ENCODE measurements at regions of chr1 and their contacts with region 1.

Region 1: DNA sequence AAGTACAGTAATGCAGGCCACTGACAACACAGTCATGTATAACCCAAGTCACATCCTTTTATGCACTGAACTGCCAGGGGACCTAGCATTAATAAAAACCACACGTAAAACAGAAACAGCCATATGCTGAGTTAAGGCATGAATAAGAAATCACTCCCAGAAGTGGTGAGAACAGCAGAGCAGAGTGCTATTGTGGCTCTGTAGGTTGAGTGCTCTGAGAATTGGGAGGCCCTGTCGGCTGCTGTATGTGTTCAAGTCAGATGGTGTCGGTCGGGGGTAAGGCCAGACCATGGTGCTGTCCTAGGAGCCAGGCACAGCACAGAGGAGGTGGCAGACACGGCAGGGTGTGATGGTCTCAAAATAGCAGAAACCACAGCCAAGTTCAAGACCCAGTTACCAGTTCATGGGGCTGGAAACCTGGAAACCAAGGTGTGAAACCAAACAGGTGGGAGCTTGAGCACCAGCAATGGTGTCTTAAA is 126.6 kb upstream of the COA6 start:
- DNase-seq: peak; percentile 93
- ATAC-seq: peak; percentile 90
- H3K4me3 ChIP-seq: 0 out of 2 replicates have a peak overlapping the region, but pooled peaks have one; percentile 3
- H3K27ac ChIP-seq: peak overlapping the region; percentile 75
- H3K4me1 ChIP-seq: peaks cover 44% of the 10 kb centered on the region
- H3K27me3 ChIP-seq: no peaks in the 10 kb centered on the region
- CTCF ChIP-seq: no peak
- EP300 ChIP-seq: peak in 1 of 2 experiments; percentile 7; a peak in 2 of 4 replicates
- POLR2A ChIP-seq: no peak
- RAD21 ChIP-seq: no peak

Region 2: GRCh38 chr1:234230414-234230862 is 16.2 kb before region 1 on chr1:
- CTCF ChIA-PET with region 1: interaction called, 14 read pairs
- POLR2A ChIA-PET with region 1: interaction called, 5 read pairs
- RAD21 ChIA-PET with region 1: interaction called, 4 read pairs
- SMC1A ChIA-PET with region 1: interaction called, 8 read pairs
- in situ Hi-C with region 1: no loop called
- intact Hi-C with region 1: no loop called
- DNase-seq: no peak
- ATAC-seq: peak; percentile 60
- H3K4me3 ChIP-seq: 0 out of 2 replicates have a peak overlapping the region, but pooled peaks have one; percentile 25
- H3K27ac ChIP-seq: no peak overlapping the region
- H3K4me1 ChIP-seq: peaks cover 7% of the 10 kb centered on the region
- H3K27me3 ChIP-seq: no peaks in the 10 kb centered on the region
- CTCF ChIP-seq: no peak
- EP300 ChIP-seq: no peak; a peak in 1 of 4 replicates
- POLR2A ChIP-seq: no peak
- RAD21 ChIP-seq: no peak

Region 3: DNA sequence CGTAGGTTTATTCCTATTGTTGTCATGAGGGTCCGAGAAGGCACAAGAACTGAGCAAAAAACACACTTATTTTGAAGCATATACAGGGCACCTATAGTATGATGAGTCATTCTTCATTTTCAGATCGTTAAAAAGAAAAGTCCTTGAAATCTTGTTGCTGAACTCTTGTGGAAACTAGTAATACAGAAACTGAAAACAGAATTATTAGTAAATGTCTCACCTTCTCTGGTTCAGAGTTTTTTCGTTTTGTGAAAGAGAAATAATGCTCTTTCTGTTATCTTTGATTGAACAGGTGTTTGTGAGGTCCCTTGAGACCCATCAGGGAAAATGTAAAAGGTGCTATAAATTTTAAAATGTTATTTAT is 24.5 kb after region 1 on chr1:
- CTCF ChIA-PET with region 1: interaction called, 5 read pairs
- POLR2A ChIA-PET with region 1: interaction called, 7 read pairs
- RAD21 ChIA-PET with region 1: interaction called, 20 read pairs
- SMC1A ChIA-PET with region 1: interaction called, 5 read pairs
- in situ Hi-C with region 1: no loop called
- intact Hi-C with region 1: loop called (anchors 1 kb)
- DNase-seq: peak; percentile 89
- ATAC-seq: peak; percentile 96
- H3K4me3 ChIP-seq: no peak overlapping the region
- H3K27ac ChIP-seq: peak overlapping the region; percentile 90
- H3K4me1 ChIP-seq: peaks cover 20% of the 10 kb centered on the region
- H3K27me3 ChIP-seq: no peaks in the 10 kb centered on the region
- CTCF ChIP-seq: no peak
- EP300 ChIP-seq: peak; percentile 97 to 99
- POLR2A ChIP-seq: no peak
- RAD21 ChIP-seq: no peak